ENCODE measurements at regions of chr19 and their contacts with region 1.

Region 1: GRCh38 chr19:45423589-45424190 is at the start of gene ERCC1:
- DNase-seq: peak; percentile 97 to 99
- H3K4me3 ChIP-seq: peak within 1 kb of the TSS; percentile 77
- H3K27ac ChIP-seq: peak within 1 kb of the TSS; percentile 99
- H3K4me1 ChIP-seq: peaks cover 39% of the 10 kb centered on the region
- H3K27me3 ChIP-seq: no peaks in the 10 kb centered on the region
- CTCF ChIP-seq: no peak
- total RNA-seq, gene ERCC1: 102 and 138 TPM in 2 replicates

Region 2: GRCh38 chr19:45478454-45479238 is 55.0 kb after region 1 on chr19:
- CTCF ChIA-PET with region 1: interaction called, 5 read pairs
- POLR2A ChIA-PET with region 1: no interaction called
- intact Hi-C with region 1: loop called (anchors 1 kb)
- DNase-seq: peak; percentile 87 to 90
- H3K4me3 ChIP-seq: peak overlapping the region; percentile 62
- H3K27ac ChIP-seq: peak overlapping the region; percentile 83
- H3K4me1 ChIP-seq: peaks cover 12% of the 10 kb centered on the region
- H3K27me3 ChIP-seq: no peaks in the 10 kb centered on the region
- CTCF ChIP-seq: peak; percentile 99

Measured in PC-9 (cell line).